Heart right ventricle (tissue), 16 donors: ENCODE measurements at regions of chr19 and their contacts with region 1.

Region 1: GRCh38 chr19:46299004-46299509 is 2.2 kb downstream of the HIF3A start:
- DNase-seq: peak; percentile 97 to 98
- ATAC-seq: peak; percentile 72 to 89 (median 80)
- H3K4me3 ChIP-seq: peak overlapping the region; percentile 45 to 72 (median 60)
- H3K27ac ChIP-seq: peak overlapping the region; percentile 87 to 99 (median 96)
- H3K4me1 ChIP-seq: peaks cover 27 to 76% (median 57%) of the 10 kb centered on the region in 9 donors
- H3K27me3 ChIP-seq: peaks cover 0 to 18% (median 0%) of the 10 kb centered on the region in 7 donors
- CTCF ChIP-seq: no peak

Region 2: GRCh38 chr19:46288896-46289588 is 10.0 kb before region 1 on chr19:
- intact Hi-C with region 1: loop called in 1 of 10 experiments (anchors 1 kb)
- DNase-seq: peak; percentile 33 to 57
- ATAC-seq: peak; percentile 66 to 94 (median 85)
- H3K4me3 ChIP-seq: no peak overlapping the region
- H3K27ac ChIP-seq: peak overlapping the region; percentile 59 to 95 (median 69)
- H3K4me1 ChIP-seq: peaks cover 0 to 22% (median 11%) of the 10 kb centered on the region in 9 donors
- H3K27me3 ChIP-seq: no peaks in the 10 kb centered on the region
- CTCF ChIP-seq: no peak

Region 3: DNA sequence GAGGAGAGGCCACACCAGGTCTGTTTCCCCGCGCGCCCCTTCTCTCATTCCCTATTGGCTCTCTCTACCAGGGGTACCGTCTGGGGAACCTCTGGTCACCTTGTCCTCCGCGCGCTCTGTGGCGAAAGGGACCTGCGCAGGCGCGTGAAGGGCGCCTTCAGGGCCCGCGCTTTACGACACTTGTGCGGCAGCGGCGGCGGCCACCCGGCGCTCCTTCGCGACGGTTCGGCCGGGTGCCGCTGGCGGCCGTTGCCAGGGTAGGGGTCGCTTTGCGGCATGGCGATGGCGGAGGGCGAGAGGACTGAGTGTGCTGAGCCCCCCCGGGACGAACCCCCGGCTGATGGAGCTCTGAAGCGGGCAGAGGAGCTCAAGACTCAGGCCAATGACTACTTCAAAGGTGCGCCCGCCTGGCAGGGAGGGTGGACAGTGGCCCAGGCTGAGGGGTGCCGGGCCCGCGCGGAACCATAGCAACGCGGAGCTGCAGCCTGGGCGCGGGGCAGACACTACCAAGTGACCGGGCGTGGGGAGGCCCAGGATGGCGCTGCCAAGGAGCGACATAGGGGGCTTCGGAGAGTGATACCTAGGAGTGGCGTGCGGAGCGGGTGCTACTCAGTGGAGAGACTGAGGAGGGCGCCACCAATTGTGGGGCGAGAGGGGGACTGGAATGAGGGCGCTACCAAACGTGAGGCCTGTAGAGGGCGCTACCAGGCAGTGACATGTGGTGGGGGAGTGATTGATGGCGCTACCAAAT is 47.9 kb after region 1 on chr19 and contains the start of gene PPP5C:
- intact Hi-C with region 1: loop called in 4 of 10 experiments (anchors 1 to 5 kb)
- DNase-seq: peak; percentile 90 to 93
- ATAC-seq: peak; percentile 84 to 89 (median 86)
- H3K4me3 ChIP-seq: peak within 1 kb of the TSS; percentile 70 to 100 (median 95)
- H3K27ac ChIP-seq: peak within 1 kb of the TSS; percentile 55 to 97 (median 89)
- H3K4me1 ChIP-seq: peaks cover 31 to 53% (median 50%) of the 10 kb centered on the region in 9 donors
- H3K27me3 ChIP-seq: no peaks in the 10 kb centered on the region
- CTCF ChIP-seq: peak; percentile 33 to 71 (median 66)
- total RNA-seq, gene PPP5C: 69.9 to 89.5 (median 76.5) TPM

Region 4: DNA sequence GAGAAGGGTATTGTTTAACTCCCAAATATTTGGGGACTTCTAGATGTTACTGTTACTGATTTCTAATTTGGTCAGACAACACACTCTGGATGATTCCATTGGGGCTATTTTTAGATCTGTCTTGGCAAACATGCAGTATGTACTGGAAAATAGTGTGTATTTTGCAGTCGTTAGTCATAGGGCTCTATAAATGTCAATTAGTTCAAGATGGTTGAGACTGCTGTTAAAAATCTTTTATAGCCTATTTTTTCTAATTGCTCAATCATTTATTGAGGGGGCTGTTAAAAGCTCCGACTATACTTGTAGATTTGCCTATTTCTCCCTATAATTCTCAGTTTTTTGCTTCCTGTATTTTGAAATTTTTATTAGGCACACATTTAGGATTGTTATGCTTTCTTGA is 79.2 kb after region 1 on chr19:
- intact Hi-C with region 1: loop called in 1 of 10 experiments (anchors 5 kb)
- DNase-seq: no peak
- ATAC-seq: peak in 6 of 8 donors; percentile 43 to 72 (median 55)
- H3K4me3 ChIP-seq: no peak overlapping the region
- H3K27ac ChIP-seq: peak overlapping the region; percentile 1 to 82 (median 72)
- H3K4me1 ChIP-seq: peaks cover 8 to 61% (median 40%) of the 10 kb centered on the region in 9 donors
- H3K27me3 ChIP-seq: no peaks in the 10 kb centered on the region
- CTCF ChIP-seq: no peak

Region 5: GRCh38 chr19:46661020-46661731 is 362.1 kb after region 1 on chr19 and contains the start of gene DACT3:
- intact Hi-C with region 1: no loop called
- DNase-seq: peak; percentile 100
- ATAC-seq: peak; percentile 93 to 98 (median 96)
- H3K4me3 ChIP-seq: peak within 1 kb of the TSS; percentile 46 to 87 (median 68)
- H3K27ac ChIP-seq: peak within 1 kb of the TSS; percentile 2 to 88 (median 74)
- H3K4me1 ChIP-seq: peaks cover 3 to 32% (median 20%) of the 10 kb centered on the region in 9 donors
- H3K27me3 ChIP-seq: peaks cover 0 to 41% (median 0%) of the 10 kb centered on the region in 7 donors
- CTCF ChIP-seq: peak in 2 of 9 donors; percentile 7 to 20
- total RNA-seq, gene DACT3: 6.9 to 29.3 (median 14.9) TPM